ENCODE measurements at regions of chr6 and their contacts with region 1.

Region 1: GRCh38 chr6:70846207-70846835 is 110.5 kb downstream of the B3GAT2 start:
- DNase-seq: no peak
- H3K4me3 ChIP-seq: no peak overlapping the region
- H3K27ac ChIP-seq: no peak overlapping the region
- H3K4me1 ChIP-seq: no peaks in the 10 kb centered on the region
- CTCF ChIP-seq: no peak

Region 2: GRCh38 chr6:70806086-70806485 is 40.2 kb before region 1 on chr6:
- CTCF ChIA-PET with region 1: no interaction called
- POLR2A ChIA-PET with region 1: no interaction called
- intact Hi-C with region 1: no loop called
- DNase-seq: no peak
- H3K4me3 ChIP-seq: no peak overlapping the region
- H3K27ac ChIP-seq: no peak overlapping the region
- H3K4me1 ChIP-seq: no peaks in the 10 kb centered on the region
- CTCF ChIP-seq: no peak

Region 3: GRCh38 chr6:70857387-70858077 is 11.2 kb after region 1 on chr6:
- CTCF ChIA-PET with region 1: no interaction called
- POLR2A ChIA-PET with region 1: interaction called, 14 read pairs
- intact Hi-C with region 1: no loop called
- DNase-seq: peak; percentile 75
- H3K4me3 ChIP-seq: peak overlapping the region; percentile 21
- H3K27ac ChIP-seq: peak overlapping the region; percentile 52
- H3K4me1 ChIP-seq: peaks cover 28% of the 10 kb centered on the region
- CTCF ChIP-seq: no peak

Region 4: GRCh38 chr6:70985156-70985555 is 138.8 kb after region 1 on chr6:
- CTCF ChIA-PET with region 1: no interaction called
- POLR2A ChIA-PET with region 1: no interaction called
- intact Hi-C with region 1: no loop called
- DNase-seq: no peak
- H3K4me3 ChIP-seq: no peak overlapping the region
- H3K27ac ChIP-seq: no peak overlapping the region
- H3K4me1 ChIP-seq: no peaks in the 10 kb centered on the region
- CTCF ChIP-seq: no peak

Measured in OCI-LY7 (cell line).